ENCODE measurements at regions of chr10 and their contacts with region 1.

Region 1: DNA sequence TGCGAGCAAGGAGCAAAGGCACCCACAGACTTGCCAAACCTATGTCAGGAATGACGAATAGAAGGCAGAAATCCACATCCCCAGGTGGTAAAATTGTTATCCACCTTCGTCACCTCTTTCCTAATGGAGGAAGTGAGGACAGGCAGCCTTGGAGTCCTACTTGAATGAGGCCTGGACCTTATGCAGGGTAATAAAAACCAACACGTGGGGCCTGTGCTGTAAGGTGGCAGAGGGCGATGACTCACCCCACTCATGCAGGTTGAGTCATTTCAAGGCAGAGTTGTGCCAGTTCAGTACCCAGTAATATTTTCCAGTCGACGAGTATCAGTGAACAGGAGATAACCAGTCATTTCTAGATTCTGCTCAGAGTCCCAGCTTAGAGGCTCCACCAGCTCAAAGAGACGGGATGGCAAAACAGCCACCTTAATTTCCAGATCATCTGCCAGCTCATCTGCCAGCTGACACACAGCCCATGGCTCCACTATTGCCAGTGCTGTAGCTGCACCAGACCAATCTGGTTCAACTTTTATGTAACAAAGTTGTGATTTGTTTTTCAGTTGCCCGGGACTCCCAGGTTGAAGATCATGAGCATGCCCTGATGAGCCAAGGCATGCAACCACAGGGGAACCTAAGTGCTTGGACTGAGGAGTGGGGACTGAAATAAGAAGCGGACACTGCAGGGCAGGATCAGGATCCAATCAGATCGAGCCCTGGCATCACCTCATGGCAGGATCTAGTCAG is 176.2 kb upstream of the ITGB1 start:
- DNase-seq: peak; percentile 90
- H3K4me3 Mint-ChIP-seq: peak overlapping the region; percentile 50
- H3K27ac Mint-ChIP-seq: peak overlapping the region; percentile 90
- H3K4me1 Mint-ChIP-seq: peaks cover 91% of the 10 kb centered on the region
- H3K27me3 Mint-ChIP-seq: peaks cover 1% of the 10 kb centered on the region

Region 2: GRCh38 chr10:32795598-32796183 is 338.5 kb before region 1 on chr10:
- CTCF ChIA-PET with region 1: no interaction called
- POLR2A ChIA-PET with region 1: no interaction called
- intact Hi-C with region 1: loop called (anchors 2 kb)
- DNase-seq: no peak
- H3K4me3 Mint-ChIP-seq: no peak overlapping the region
- H3K27ac Mint-ChIP-seq: no peak overlapping the region
- H3K4me1 Mint-ChIP-seq: no peaks in the 10 kb centered on the region
- H3K27me3 Mint-ChIP-seq: no peaks in the 10 kb centered on the region

Region 3: DNA sequence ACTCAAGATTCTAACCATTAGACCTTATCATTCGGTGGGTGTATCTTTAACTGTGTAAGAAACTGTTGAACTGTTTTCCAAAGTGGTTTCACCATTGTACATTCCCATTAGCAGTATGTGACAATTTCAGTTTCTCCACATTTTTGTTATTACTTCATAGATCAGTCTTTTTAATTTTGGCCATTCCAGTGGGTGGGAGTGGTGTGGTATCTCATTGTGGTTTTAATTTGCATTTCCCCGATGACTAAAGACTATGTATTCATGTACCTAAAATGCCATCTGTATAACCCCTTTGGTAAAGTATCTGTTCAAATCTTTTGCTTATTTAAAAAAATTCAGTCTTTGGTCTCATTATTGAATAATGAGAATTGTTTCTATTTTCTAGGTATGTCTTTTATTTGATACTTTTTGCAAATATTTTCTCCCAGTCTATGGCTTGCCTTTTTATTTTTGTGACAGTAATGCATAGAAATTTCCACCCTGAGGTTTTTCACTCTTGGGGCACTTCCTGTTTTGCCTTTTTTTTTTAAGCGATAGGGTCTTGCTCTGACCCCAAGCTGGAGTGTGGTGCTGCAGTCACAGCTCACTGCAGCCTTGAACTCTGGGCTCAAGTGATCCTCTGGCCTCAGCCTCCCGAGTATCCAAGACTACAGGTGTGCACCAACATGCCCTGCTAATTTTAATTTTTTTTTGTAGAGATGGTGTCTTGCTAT is 35.1 kb before region 1 on chr10:
- CTCF ChIA-PET with region 1: interaction called, 8 read pairs
- POLR2A ChIA-PET with region 1: interaction called, 6 read pairs
- intact Hi-C with region 1: loop called (anchors 1 kb)
- DNase-seq: no peak
- H3K4me3 Mint-ChIP-seq: peak overlapping the region; percentile 6
- H3K27ac Mint-ChIP-seq: peak overlapping the region; percentile 74
- H3K4me1 Mint-ChIP-seq: peaks cover 70% of the 10 kb centered on the region
- H3K27me3 Mint-ChIP-seq: no peaks in the 10 kb centered on the region

Region 4: DNA sequence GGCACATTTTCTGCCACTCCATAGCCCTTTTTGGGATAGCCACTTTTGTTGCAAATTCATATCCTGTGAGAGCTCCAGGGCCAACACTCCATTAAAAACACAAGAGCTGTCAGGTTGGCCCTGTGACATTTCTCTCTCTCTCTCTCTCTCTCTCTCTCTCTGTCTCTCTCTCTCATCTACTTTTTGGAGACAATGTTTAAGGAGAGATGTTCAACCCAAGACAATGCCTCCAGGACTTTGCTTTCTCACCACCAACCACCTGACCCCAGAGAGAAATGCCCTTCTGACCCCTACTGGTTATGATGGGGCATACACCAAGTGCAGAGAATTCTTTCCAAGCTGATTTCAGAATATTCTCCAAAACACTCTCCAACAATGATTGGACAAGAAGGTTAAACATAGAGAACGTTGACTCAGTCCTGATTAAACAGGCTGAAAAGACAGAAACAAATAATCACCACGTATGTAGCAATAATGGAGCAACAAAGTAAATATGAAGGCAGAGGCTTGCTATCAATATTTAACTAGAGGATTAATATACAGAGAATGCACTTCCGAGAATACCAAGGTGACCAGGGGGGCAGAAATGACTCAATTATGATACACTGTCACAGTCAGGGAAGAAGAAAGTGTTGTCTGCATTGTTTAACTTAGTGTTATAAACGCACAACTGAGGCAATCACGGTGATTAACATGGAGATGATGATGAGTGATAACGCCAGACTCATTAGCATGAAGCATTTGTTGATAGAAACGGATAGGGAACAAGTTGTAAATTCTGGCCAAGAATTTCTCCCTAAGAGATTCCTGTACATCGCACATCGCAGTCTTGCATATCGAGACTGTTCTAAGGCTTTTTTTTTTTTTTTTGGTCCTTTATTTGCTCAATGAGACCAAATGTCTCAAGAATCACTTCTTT is 21.8 kb after region 1 on chr10:
- CTCF ChIA-PET with region 1: interaction called, 25 read pairs
- POLR2A ChIA-PET with region 1: interaction called, 18 read pairs
- intact Hi-C with region 1: loop called (anchors 1 kb)
- DNase-seq: peak; percentile 53
- H3K4me3 Mint-ChIP-seq: no peak overlapping the region
- H3K27ac Mint-ChIP-seq: no peak overlapping the region
- H3K4me1 Mint-ChIP-seq: peaks cover 46% of the 10 kb centered on the region
- H3K27me3 Mint-ChIP-seq: no peaks in the 10 kb centered on the region

Region 5: GRCh38 chr10:33487014-33487776 is 353.0 kb after region 1 on chr10:
- CTCF ChIA-PET with region 1: no interaction called
- POLR2A ChIA-PET with region 1: no interaction called
- intact Hi-C with region 1: no loop called
- DNase-seq: no peak
- H3K4me3 Mint-ChIP-seq: no peak overlapping the region
- H3K27ac Mint-ChIP-seq: no peak overlapping the region
- H3K4me1 Mint-ChIP-seq: peaks cover 10% of the 10 kb centered on the region
- H3K27me3 Mint-ChIP-seq: no peaks in the 10 kb centered on the region